Naive thymus-derived CD4-positive, alpha-beta T cell (primary cell): ENCODE measurements at regions of chr6 and their contacts with region 1.

Region 1: DNA sequence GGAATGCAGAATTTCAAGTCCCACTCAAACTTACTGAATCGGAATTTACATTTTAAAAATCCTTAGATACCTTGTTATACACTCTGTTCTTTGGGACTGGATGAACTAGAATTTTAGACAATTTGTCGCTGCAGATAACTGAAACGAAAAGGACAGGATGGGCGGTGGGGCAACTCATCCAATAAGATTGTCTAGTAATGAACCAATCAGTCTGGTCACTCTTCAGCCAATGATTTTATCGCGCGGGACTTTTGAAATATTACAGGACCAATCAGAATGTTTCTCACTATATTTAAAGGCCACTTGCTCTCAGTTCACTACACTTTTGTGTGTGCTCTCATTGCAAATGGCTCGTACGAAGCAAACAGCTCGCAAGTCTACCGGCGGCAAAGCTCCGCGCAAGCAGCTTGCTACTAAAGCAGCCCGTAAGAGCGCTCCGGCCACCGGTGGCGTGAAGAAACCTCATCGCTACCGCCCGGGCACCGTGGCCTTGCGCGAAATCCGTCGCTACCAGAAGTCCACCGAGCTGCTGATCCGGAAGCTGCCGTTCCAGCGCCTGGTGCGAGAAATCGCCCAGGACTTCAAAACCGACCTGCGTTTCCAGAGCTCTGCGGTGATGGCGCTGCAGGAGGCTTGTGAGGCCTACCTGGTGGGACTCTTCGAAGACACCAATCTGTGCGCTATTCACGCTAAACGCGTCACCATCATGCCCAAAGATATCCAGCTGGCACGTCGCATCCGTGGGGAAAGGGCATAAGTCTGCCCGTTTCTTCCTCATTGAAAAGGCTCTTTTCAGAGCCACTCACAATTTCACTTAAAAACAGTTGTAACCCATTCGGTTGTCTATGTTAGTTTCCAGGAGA is 41.9 kb upstream of the HFE start:
- DNase-seq: peak; percentile 39 to 93 (median 89)
- ATAC-seq: peak; percentile 68
- H3K4me3 ChIP-seq: peak overlapping the region; percentile 91
- H3K4me3 Mint-ChIP-seq: peak overlapping the region; percentile 87 to 98 (median 94)
- H3K27ac ChIP-seq: peak overlapping the region; percentile 90
- H3K27ac Mint-ChIP-seq: peak overlapping the region; percentile 80 to 98 (median 95)
- H3K4me1 ChIP-seq: peaks cover 7 to 19% of the 10 kb centered on the region in 2 donors
- H3K4me1 Mint-ChIP-seq: peaks cover 8 to 51% (median 20%) of the 10 kb centered on the region in 7 donors
- H3K27me3 ChIP-seq: no peaks in the 10 kb centered on the region
- H3K27me3 Mint-ChIP-seq: peaks cover 0 to 3% (median 0%) of the 10 kb centered on the region in 5 donors

Region 2: GRCh38 chr6:25816252-25816651 is 229.0 kb before region 1 on chr6:
- CTCF ChIA-PET with region 1: no interaction called
- POLR2A ChIA-PET with region 1: no interaction called
- intact Hi-C with region 1: no loop called
- DNase-seq: no peak
- ATAC-seq: no peak
- H3K4me3 ChIP-seq: no peak overlapping the region
- H3K4me3 Mint-ChIP-seq: no peak overlapping the region
- H3K27ac ChIP-seq: no peak overlapping the region
- H3K27ac Mint-ChIP-seq: no peak overlapping the region
- H3K4me1 ChIP-seq: no peaks in the 10 kb centered on the region
- H3K4me1 Mint-ChIP-seq: peaks cover 0 to under 1% (median 0%) of the 10 kb centered on the region in 7 donors
- H3K27me3 ChIP-seq: no peaks in the 10 kb centered on the region
- H3K27me3 Mint-ChIP-seq: peaks cover 10 to 26% (median 19%) of the 10 kb centered on the region in 5 donors

Region 3: GRCh38 chr6:26087284-26088115 is 42.2 kb after region 1 on chr6 and contains the start of gene HFE:
- CTCF ChIA-PET with region 1: no interaction called
- POLR2A ChIA-PET with region 1: interaction called, 19 read pairs
- intact Hi-C with region 1: no loop called
- DNase-seq: peak in 8 of 9 donors; percentile 32 to 46 (median 38)
- ATAC-seq: peak; percentile 41
- H3K4me3 ChIP-seq: peak within 1 kb of the TSS; percentile 88
- H3K4me3 Mint-ChIP-seq: peak within 1 kb of the TSS; percentile 84 to 91 (median 88)
- H3K27ac ChIP-seq: peak within 1 kb of the TSS; percentile 72
- H3K27ac Mint-ChIP-seq: peak within 1 kb of the TSS; percentile 73 to 91 (median 84)
- H3K4me1 ChIP-seq: peaks cover 18 to 23% of the 10 kb centered on the region in 2 donors
- H3K4me1 Mint-ChIP-seq: peaks cover 31 to 51% (median 39%) of the 10 kb centered on the region in 7 donors
- H3K27me3 ChIP-seq: no peaks in the 10 kb centered on the region
- H3K27me3 Mint-ChIP-seq: peaks cover 0 to 5% (median 5%) of the 10 kb centered on the region in 5 donors
- total RNA-seq, gene HFE: 1.5 to 4.6 (median 2.5) TPM

Region 4: DNA sequence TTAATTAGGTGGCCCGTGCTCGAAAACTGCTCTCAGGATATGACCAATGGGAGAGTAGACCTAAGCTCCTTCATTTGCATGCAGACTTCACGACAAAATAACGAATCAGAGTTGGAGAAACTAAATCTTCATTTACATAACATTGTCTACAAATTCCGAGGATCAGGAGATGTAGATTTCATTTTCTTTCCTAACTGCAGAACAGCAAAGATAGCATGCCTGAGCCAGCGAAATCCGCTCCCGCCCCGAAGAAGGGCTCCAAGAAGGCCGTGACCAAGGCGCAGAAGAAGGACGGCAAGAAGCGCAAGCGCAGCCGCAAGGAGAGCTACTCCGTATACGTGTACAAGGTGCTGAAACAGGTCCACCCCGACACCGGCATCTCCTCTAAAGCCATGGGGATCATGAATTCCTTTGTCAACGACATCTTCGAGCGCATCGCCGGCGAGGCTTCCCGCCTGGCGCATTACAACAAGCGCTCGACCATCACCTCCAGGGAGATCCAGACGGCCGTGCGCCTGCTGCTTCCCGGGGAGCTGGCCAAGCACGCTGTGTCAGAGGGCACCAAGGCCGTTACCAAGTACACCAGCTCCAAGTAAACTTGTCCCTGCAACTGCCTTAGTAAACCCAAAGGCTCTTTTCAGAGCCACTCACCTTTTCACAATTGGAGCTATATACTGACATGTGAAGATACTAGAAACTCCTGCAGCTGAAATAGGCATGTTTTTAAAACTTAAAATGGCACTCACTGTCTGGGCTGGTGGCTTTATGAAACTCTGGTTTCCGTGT is 138.5 kb after region 1 on chr6:
- CTCF ChIA-PET with region 1: no interaction called
- POLR2A ChIA-PET with region 1: interaction called, 11 read pairs
- intact Hi-C with region 1: no loop called
- DNase-seq: peak; percentile 43 to 83 (median 77)
- ATAC-seq: peak; percentile 91
- H3K4me3 ChIP-seq: peak overlapping the region; percentile 82
- H3K4me3 Mint-ChIP-seq: peak overlapping the region; percentile 84 to 99 (median 98)
- H3K27ac ChIP-seq: peak overlapping the region; percentile 76
- H3K27ac Mint-ChIP-seq: peak overlapping the region; percentile 83 to 99 (median 90)
- H3K4me1 ChIP-seq: peaks cover 13 to 30% of the 10 kb centered on the region in 2 donors
- H3K4me1 Mint-ChIP-seq: peaks cover 19 to 59% (median 49%) of the 10 kb centered on the region in 7 donors
- H3K27me3 ChIP-seq: no peaks in the 10 kb centered on the region
- H3K27me3 Mint-ChIP-seq: no peaks in the 10 kb centered on the region

Region 5: GRCh38 chr6:26249957-26250697 is 204.8 kb after region 1 on chr6:
- CTCF ChIA-PET with region 1: no interaction called
- POLR2A ChIA-PET with region 1: interaction called, 12 read pairs
- intact Hi-C with region 1: no loop called
- DNase-seq: peak; percentile 53 to 85 (median 80)
- ATAC-seq: peak; percentile 85
- H3K4me3 ChIP-seq: peak overlapping the region; percentile 84
- H3K4me3 Mint-ChIP-seq: peak overlapping the region; percentile 88 to 100 (median 96)
- H3K27ac ChIP-seq: peak overlapping the region; percentile 71
- H3K27ac Mint-ChIP-seq: peak overlapping the region; percentile 85 to 97 (median 94)
- H3K4me1 ChIP-seq: peaks cover 4 to 19% of the 10 kb centered on the region in 2 donors
- H3K4me1 Mint-ChIP-seq: peaks cover 20 to 48% (median 39%) of the 10 kb centered on the region in 7 donors
- H3K27me3 ChIP-seq: no peaks in the 10 kb centered on the region
- H3K27me3 Mint-ChIP-seq: no peaks in the 10 kb centered on the region

Region 6: DNA sequence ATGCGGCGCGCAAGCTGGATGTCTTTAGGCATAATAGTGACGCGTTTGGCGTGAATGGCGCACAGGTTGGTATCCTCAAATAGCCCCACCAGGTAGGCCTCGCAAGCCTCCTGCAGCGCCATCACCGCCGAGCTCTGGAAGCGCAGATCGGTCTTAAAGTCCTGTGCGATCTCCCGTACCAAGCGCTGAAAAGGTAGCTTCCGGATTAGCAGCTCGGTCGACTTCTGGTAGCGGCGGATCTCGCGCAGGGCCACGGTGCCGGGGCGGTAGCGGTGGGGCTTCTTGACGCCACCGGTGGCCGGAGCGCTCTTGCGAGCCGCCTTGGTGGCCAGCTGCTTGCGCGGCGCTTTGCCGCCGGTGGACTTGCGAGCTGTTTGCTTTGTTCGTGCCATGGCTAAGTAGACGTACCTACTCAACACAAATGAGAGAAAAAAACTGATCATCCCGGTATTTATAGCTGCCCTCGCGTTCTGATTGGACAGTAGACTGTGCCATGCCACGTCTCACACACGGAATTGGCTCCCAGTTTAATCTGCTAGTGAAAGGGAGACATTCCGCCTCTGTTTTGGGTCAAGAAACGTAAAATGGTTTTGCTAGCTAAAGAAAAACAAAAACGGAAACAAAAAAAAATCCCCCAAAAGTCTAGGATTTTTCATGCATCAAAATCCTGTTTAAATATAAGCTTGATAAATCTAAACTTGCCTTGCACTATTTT is 1826.8 kb after region 1 on chr6:
- CTCF ChIA-PET with region 1: no interaction called
- POLR2A ChIA-PET with region 1: interaction called, 23 read pairs
- intact Hi-C with region 1: no loop called
- DNase-seq: peak; percentile 68 to 97 (median 94)
- ATAC-seq: peak; percentile 88
- H3K4me3 ChIP-seq: peak overlapping the region; percentile 69
- H3K4me3 Mint-ChIP-seq: peak overlapping the region; percentile 83 to 99 (median 94)
- H3K27ac ChIP-seq: peak overlapping the region; percentile 84
- H3K27ac Mint-ChIP-seq: peak overlapping the region; percentile 95 to 98 (median 97)
- H3K4me1 ChIP-seq: peaks cover under 1 to 19% of the 10 kb centered on the region in 2 donors
- H3K4me1 Mint-ChIP-seq: peaks cover 15 to 69% (median 42%) of the 10 kb centered on the region in 7 donors
- H3K27me3 ChIP-seq: no peaks in the 10 kb centered on the region
- H3K27me3 Mint-ChIP-seq: peaks cover 0 to 8% (median 0%) of the 10 kb centered on the region in 5 donors